Adrenal gland (tissue), 19 donors: ENCODE measurements at regions of chr1 and their contacts with region 1.

Region 1: GRCh38 chr1:29245876-29246275 is 9.6 kb downstream of the PTPRU start:
- DNase-seq: peak in 4 of 7 donors; percentile 32 to 68 (median 43)
- H3K4me3 ChIP-seq: no peak overlapping the region
- H3K27ac ChIP-seq: no peak overlapping the region
- H3K4me1 ChIP-seq: no peaks in the 10 kb centered on the region
- H3K27me3 ChIP-seq: no peaks in the 10 kb centered on the region
- CTCF ChIP-seq: peak in 5 of 6 experiments; percentile 31 to 49 (median 38)
- POLR2A ChIP-seq: no peak

Region 2: GRCh38 chr1:29417147-29417858 is 171.4 kb after region 1 on chr1:
- intact Hi-C with region 1: no loop called
- DNase-seq: peak in 5 of 7 donors; percentile 19 to 53 (median 28)
- H3K4me3 ChIP-seq: no peak overlapping the region
- H3K27ac ChIP-seq: peak overlapping the region in 2 of 5 donors; percentile 68 to 77
- H3K4me1 ChIP-seq: no peaks in the 10 kb centered on the region
- H3K27me3 ChIP-seq: no peaks in the 10 kb centered on the region
- CTCF ChIP-seq: no peak
- POLR2A ChIP-seq: no peak

Region 3: DNA sequence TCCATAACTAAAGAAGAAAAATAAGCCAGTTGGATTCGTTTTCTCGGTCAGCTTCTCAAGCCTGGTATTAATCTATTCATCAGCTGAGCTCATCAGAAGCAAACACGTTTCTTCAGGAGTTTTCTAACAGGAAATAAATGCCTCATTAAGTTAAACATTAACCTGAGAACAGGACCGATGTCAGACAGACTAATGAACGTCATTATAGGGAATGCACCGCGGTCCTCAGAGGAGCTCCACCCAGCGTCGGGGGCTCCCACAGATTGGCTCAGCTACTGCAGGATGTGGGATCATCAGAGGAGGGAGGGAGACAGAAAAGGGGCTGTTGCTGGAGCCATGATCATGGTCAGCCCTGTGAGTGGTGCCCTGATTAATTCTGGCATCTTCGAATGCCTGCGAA is 605.8 kb after region 1 on chr1:
- intact Hi-C with region 1: loop called in 1 of 2 experiments (anchors 10 kb)
- DNase-seq: no peak
- H3K4me3 ChIP-seq: no peak overlapping the region
- H3K27ac ChIP-seq: no peak overlapping the region
- H3K4me1 ChIP-seq: no peaks in the 10 kb centered on the region
- H3K27me3 ChIP-seq: peaks cover 7% of the 10 kb centered on the region
- CTCF ChIP-seq: no peak
- POLR2A ChIP-seq: no peak

Region 4: GRCh38 chr1:30111431-30111830 is 865.6 kb after region 1 on chr1:
- intact Hi-C with region 1: loop called in 1 of 2 experiments (anchors 10 kb)
- DNase-seq: peak in 6 of 7 donors; percentile 35 to 79 (median 44)
- H3K4me3 ChIP-seq: no peak overlapping the region
- H3K27ac ChIP-seq: no peak overlapping the region
- H3K4me1 ChIP-seq: no peaks in the 10 kb centered on the region
- H3K27me3 ChIP-seq: peaks cover 10% of the 10 kb centered on the region
- CTCF ChIP-seq: peak in 5 of 6 experiments; percentile 21 to 57 (median 49)
- POLR2A ChIP-seq: no peak